HCT116 (cell line): ENCODE measurements at regions of chr12 and their contacts with region 1.

Region 1: DNA sequence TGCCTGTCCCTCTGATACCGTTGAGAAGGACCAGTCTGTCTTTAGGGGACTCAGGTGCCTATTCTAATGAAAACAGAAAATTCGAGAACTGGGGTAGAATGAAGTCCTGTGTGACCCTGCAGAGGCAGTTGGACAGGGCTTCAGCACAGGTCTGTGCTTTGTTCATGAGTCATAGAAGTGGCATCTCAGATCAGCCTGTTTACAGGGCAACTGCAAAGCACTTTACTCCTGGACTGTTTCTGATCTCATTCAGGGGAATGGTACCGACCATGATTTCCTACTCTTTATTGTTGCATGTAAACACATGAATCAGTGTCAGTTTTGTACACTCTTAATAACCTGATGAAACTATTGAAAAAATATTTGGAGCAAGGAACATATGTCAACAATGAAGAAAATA is 1517.0 kb downstream of the AACS start:
- DNase-seq: no peak
- ATAC-seq: no peak
- H3K4me3 ChIP-seq: no peak overlapping the region
- H3K27ac ChIP-seq: no peak overlapping the region
- H3K4me1 ChIP-seq: no peaks in the 10 kb centered on the region
- H3K27me3 ChIP-seq: no peaks in the 10 kb centered on the region
- CTCF ChIP-seq: no peak
- POLR2A ChIP-seq: no peak
- RAD21 ChIP-seq: no peak

Region 2: DNA sequence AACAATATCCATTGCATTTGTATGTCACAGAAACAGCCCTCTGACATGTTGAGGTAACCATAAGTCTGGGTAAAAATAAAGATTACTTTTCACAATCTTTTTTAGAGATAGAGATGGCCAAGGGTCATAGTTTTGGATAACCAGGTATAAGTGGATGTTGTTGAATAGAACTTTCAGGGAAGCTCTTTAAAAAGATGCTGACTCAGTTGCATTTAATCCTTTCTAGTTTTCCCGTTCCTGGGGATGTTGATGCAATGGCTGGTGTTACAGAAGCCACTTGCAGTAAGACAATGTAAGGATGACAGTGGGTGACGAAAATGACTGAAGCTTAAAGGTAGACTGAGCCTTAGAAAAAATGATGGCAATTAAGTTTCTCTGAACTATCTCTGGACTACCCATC is 43.3 kb before region 1 on chr12:
- CTCF ChIA-PET with region 1: no interaction called
- POLR2A ChIA-PET with region 1: no interaction called
- RAD21 ChIA-PET with region 1: no interaction called
- intact Hi-C with region 1: loop called (anchors 1 kb)
- DNase-seq: no peak
- ATAC-seq: no peak
- H3K4me3 ChIP-seq: no peak overlapping the region
- H3K27ac ChIP-seq: no peak overlapping the region
- H3K4me1 ChIP-seq: no peaks in the 10 kb centered on the region
- H3K27me3 ChIP-seq: no peaks in the 10 kb centered on the region
- CTCF ChIP-seq: no peak
- POLR2A ChIP-seq: no peak
- RAD21 ChIP-seq: no peak

Region 3: GRCh38 chr12:126734710-126735109 is 152.5 kb after region 1 on chr12:
- CTCF ChIA-PET with region 1: no interaction called
- POLR2A ChIA-PET with region 1: no interaction called
- RAD21 ChIA-PET with region 1: no interaction called
- intact Hi-C with region 1: no loop called
- DNase-seq: no peak
- ATAC-seq: no peak
- H3K4me3 ChIP-seq: no peak overlapping the region
- H3K27ac ChIP-seq: no peak overlapping the region
- H3K4me1 ChIP-seq: no peaks in the 10 kb centered on the region
- H3K27me3 ChIP-seq: no peaks in the 10 kb centered on the region
- CTCF ChIP-seq: no peak
- POLR2A ChIP-seq: no peak
- RAD21 ChIP-seq: no peak